ENCODE measurements at regions of chr3 and their contacts with region 1.

Region 1: GRCh38 chr3:48151058-48151806 is 37.0 kb downstream of the CDC25A start:
- DNase-seq: peak; percentile 81
- ATAC-seq: peak; percentile 96
- H3K4me3 Mint-ChIP-seq: no peak overlapping the region
- H3K27ac Mint-ChIP-seq: no peak overlapping the region
- H3K4me1 Mint-ChIP-seq: no peaks in the 10 kb centered on the region
- H3K27me3 Mint-ChIP-seq: no peaks in the 10 kb centered on the region

Region 2: DNA sequence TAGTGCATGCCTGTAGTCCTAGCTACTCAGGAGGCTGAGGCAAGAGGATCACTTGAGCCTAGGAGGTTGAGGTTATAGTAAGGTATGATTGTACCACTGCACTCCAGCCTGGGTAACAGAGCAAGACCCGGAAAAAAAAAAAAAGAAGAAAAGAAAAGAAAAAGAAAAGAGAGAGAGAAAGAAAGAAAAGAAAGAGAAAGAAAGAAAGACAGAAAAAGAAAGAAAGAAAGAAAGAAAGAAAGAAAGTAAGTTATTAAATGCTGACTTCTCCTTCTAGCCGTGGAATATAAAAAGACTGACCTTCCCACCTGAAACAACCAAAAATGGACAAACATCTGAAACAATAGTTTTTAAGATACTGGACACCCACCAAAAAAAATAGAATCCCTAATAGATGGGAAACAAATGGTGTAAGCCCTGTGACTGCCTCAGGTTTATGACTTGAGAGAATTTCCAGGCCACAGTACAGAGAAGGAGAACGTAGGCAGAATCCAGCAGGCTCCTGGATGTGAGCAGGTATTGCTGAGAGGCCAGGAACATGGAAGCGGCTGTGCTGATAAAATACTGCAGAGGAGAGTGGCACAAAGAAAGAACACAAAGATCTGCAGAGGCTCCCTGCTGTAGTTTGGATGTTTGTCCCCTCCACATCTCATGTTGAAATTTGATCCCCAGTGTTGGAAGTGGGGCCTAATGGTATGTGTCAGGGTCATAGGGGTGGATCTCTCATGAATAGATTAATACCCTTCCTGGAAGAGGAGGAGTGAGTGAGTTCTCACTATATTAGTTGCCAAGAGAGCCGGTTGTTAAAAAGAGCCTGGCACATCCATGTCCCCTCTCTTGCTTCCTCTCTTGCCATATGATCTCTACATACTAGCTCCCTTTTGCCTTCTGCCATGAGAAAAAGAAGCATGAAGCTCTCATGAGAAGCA is 1391.7 kb before region 1 on chr3:
- CTCF ChIA-PET with region 1: no interaction called
- POLR2A ChIA-PET with region 1: no interaction called
- intact Hi-C with region 1: no loop called
- DNase-seq: no peak
- ATAC-seq: no peak
- H3K4me3 Mint-ChIP-seq: no peak overlapping the region
- H3K27ac Mint-ChIP-seq: no peak overlapping the region
- H3K4me1 Mint-ChIP-seq: no peaks in the 10 kb centered on the region
- H3K27me3 Mint-ChIP-seq: no peaks in the 10 kb centered on the region

Region 3: DNA sequence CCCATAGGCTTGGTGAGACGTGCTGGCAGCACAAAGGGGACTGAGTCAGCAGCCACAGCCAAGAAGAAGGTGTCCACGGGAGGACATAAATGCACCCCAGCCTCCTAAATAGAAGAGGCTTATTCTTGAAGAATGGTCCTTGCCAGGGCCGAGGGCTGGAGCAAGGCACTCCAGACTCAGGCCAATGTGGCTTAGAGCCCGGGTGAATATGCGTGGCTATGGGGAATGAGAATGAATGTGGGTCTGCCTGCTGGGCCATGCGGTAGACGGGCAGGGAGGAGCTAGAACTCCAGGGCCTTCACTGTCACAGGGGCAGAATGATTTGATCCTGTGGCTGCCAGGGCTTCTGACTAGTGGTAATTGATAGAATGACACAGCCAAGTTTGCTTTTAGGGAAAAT is 314.2 kb before region 1 on chr3:
- CTCF ChIA-PET with region 1: interaction called, 10 read pairs
- POLR2A ChIA-PET with region 1: no interaction called
- intact Hi-C with region 1: loop called in 1 of 2 experiments (anchors 1 kb)
- DNase-seq: no peak
- ATAC-seq: no peak
- H3K4me3 Mint-ChIP-seq: no peak overlapping the region
- H3K27ac Mint-ChIP-seq: no peak overlapping the region
- H3K4me1 Mint-ChIP-seq: no peaks in the 10 kb centered on the region
- H3K27me3 Mint-ChIP-seq: no peaks in the 10 kb centered on the region

Region 4: GRCh38 chr3:47849699-47850563 is 301.3 kb before region 1 on chr3:
- CTCF ChIA-PET with region 1: no interaction called
- POLR2A ChIA-PET with region 1: no interaction called
- intact Hi-C with region 1: loop called in 1 of 2 experiments (anchors 10 kb)
- DNase-seq: no peak
- ATAC-seq: peak; percentile 50
- H3K4me3 Mint-ChIP-seq: no peak overlapping the region
- H3K27ac Mint-ChIP-seq: peak overlapping the region; percentile 51
- H3K4me1 Mint-ChIP-seq: no peaks in the 10 kb centered on the region
- H3K27me3 Mint-ChIP-seq: no peaks in the 10 kb centered on the region